Right cardiac atrium (tissue), 5 donors: ENCODE measurements at regions of chr6 and their contacts with region 1.

Region 1: DNA sequence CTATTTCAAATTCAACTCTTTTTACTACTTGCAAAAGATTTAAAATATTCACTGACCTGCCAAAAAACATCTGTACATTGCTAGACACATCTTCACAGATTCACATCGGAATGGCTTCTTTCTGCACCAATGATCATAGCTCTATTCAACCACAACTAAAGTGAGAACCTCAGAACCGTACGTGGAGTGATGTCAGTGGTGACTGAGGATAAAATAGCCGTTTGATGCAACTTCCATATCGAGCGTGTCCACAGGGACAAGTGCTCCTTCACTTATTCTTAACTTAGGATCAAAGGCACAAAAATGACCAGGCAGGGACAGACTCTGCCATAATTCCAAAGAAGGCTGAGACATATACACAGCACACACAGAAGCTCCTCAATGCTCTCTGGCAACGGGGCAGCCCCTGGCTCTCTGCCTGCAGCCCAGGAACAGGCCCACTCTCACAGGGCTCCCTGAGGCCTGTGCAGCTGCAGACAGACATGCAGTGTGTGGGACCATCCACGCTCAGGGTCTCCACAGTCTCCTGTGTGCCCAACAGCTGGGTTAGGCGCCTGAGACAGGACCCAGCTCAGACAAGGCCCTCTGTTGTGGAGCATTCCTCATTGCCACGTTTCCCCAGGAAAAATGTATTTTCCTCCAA is 22.8 kb downstream of the FYN start:
- DNase-seq: peak; percentile 46 to 80 (median 75)
- ATAC-seq: peak in 1 of 2 donors; percentile 47
- H3K4me3 ChIP-seq: no peak overlapping the region
- H3K27ac ChIP-seq: peak overlapping the region; percentile 44
- H3K4me1 ChIP-seq: peaks cover 40% of the 10 kb centered on the region
- H3K27me3 ChIP-seq: no peaks in the 10 kb centered on the region

Region 2: DNA sequence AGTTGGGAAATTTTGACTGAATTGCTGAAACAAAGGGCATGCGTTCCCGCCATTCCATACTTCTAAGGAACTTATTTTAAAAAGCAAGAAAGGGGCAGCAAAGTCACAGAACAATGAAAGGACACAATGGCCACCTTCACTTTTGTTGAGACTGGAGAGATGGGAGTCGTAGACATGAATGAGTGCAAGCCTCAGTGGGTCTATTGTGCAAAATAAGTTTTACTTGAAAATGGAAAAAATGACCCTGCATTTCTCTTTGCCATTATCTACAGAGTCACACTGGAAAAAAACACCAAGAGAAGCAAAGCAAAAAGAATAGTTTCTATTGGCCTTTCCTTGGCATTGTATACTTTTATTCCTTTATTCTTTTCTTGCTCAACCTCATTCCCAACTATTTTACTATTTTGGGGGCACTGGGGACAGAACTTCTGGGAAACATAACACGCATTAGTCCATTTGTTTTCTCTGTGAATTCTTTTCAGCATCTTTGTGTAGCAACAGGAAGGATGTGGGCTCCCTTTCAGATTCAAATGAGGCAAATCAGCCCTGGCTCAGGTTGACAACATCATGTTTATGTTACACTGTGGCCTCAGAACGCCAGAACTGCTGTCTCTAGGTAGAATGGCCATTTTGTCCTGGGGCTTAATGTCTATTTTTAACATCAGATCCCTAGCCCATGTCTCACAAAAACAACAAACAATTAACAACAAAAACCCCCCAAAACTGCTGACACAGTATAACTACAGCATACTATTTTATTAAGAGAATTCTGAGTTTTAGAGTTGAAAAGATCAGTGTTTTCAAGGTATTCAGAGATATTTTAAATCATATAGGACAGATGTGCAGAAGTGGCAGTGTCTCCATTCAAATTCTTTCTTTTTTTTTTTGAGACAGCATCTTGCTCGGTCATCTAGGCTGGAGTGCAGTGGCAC is 99.4 kb before region 1 on chr6:
- intact Hi-C with region 1: no loop called
- DNase-seq: no peak
- ATAC-seq: peak in 1 of 2 donors; percentile 56
- H3K4me3 ChIP-seq: no peak overlapping the region
- H3K27ac ChIP-seq: peak overlapping the region; percentile 45
- H3K4me1 ChIP-seq: peaks cover 14% of the 10 kb centered on the region
- H3K27me3 ChIP-seq: no peaks in the 10 kb centered on the region

Region 3: DNA sequence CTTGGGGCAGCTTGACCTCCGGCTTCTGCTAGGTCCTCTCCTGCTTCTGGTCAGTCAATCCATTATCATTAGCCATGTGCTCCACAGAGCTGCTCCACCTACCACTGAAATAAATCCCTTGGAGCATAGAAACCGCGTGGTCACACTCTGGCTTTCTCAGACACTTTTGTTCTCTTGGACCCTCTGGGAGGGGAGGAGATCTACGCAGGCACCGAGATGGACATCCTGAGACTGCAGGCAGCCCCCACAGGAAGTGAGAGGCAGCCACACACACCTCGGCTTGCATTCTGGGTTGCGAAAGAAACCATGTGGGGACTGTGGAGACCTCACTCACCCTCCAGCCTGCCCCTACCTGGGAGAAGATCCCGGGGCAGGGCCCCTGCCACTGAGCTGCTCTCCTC is 56.7 kb before region 1 on chr6:
- intact Hi-C with region 1: loop called in 1 of 4 experiments (anchors 10 kb)
- DNase-seq: no peak
- ATAC-seq: peak in 1 of 2 donors; percentile 30
- H3K4me3 ChIP-seq: no peak overlapping the region
- H3K27ac ChIP-seq: no peak overlapping the region
- H3K4me1 ChIP-seq: peaks cover 10% of the 10 kb centered on the region
- H3K27me3 ChIP-seq: no peaks in the 10 kb centered on the region

Region 4: GRCh38 chr6:112117554-112117953 is 267.1 kb after region 1 on chr6:
- intact Hi-C with region 1: no loop called
- DNase-seq: no peak
- ATAC-seq: no peak
- H3K4me3 ChIP-seq: no peak overlapping the region
- H3K27ac ChIP-seq: no peak overlapping the region
- H3K4me1 ChIP-seq: peaks cover 3% of the 10 kb centered on the region
- H3K27me3 ChIP-seq: no peaks in the 10 kb centered on the region